ENCODE measurements at regions of chr17 and their contacts with region 1.

Region 1: GRCh38 chr17:2094891-2095535 is 40.1 kb downstream of the HIC1 start:
- DNase-seq: no peak
- ATAC-seq: no peak
- H3K4me3 Mint-ChIP-seq: no peak overlapping the region
- H3K27ac Mint-ChIP-seq: no peak overlapping the region
- H3K4me1 Mint-ChIP-seq: peaks cover 19% of the 10 kb centered on the region
- H3K27me3 Mint-ChIP-seq: no peaks in the 10 kb centered on the region

Region 2: GRCh38 chr17:1999557-2000251 is 95.3 kb before region 1 on chr17:
- CTCF ChIA-PET with region 1: no interaction called
- POLR2A ChIA-PET with region 1: no interaction called
- intact Hi-C with region 1: no loop called
- DNase-seq: no peak
- ATAC-seq: no peak
- H3K4me3 Mint-ChIP-seq: no peak overlapping the region
- H3K27ac Mint-ChIP-seq: no peak overlapping the region
- H3K4me1 Mint-ChIP-seq: no peaks in the 10 kb centered on the region
- H3K27me3 Mint-ChIP-seq: peaks cover 23% of the 10 kb centered on the region

Region 3: DNA sequence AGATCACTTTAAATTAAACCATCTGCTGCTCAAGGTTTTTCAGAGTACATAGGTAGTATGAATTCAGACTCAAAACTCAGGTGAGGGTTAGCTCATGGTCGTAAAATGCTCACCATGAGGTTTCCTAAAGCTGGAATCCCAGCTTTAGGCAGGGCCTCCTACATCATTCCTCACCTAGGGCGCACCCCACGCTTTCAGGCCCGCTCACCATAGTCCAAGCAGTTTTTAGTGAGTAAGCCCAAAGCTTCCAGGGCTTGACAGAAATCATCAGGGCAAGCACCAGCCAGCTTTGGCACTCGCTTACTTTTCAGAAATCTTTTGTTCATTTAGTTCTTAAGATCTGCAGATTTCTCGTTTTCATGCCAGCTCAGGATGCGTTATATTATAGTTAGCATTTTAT is 49.7 kb after region 1 on chr17:
- CTCF ChIA-PET with region 1: interaction called, 3 read pairs
- POLR2A ChIA-PET with region 1: interaction called, 11 read pairs
- intact Hi-C with region 1: no loop called
- DNase-seq: no peak
- ATAC-seq: no peak
- H3K4me3 Mint-ChIP-seq: no peak overlapping the region
- H3K27ac Mint-ChIP-seq: no peak overlapping the region
- H3K4me1 Mint-ChIP-seq: peaks cover 4% of the 10 kb centered on the region
- H3K27me3 Mint-ChIP-seq: no peaks in the 10 kb centered on the region

Region 4: GRCh38 chr17:2222901-2223616 is 128.0 kb after region 1 on chr17:
- CTCF ChIA-PET with region 1: no interaction called
- POLR2A ChIA-PET with region 1: no interaction called
- intact Hi-C with region 1: no loop called
- DNase-seq: peak; percentile 73
- ATAC-seq: peak; percentile 73
- H3K4me3 Mint-ChIP-seq: peak overlapping the region; percentile 25
- H3K27ac Mint-ChIP-seq: peak overlapping the region; percentile 57
- H3K4me1 Mint-ChIP-seq: peaks cover 38% of the 10 kb centered on the region
- H3K27me3 Mint-ChIP-seq: no peaks in the 10 kb centered on the region